ENCODE measurements at regions of chr3 and their contacts with region 1.

Region 1: GRCh38 chr3:128426128-128426921 is 40.4 kb downstream of the DNAJB8 start:
- DNase-seq: peak; percentile 55
- ATAC-seq: peak; percentile 99
- H3K4me3 Mint-ChIP-seq: no peak overlapping the region
- H3K27ac Mint-ChIP-seq: no peak overlapping the region
- H3K4me1 Mint-ChIP-seq: no peaks in the 10 kb centered on the region
- H3K27me3 Mint-ChIP-seq: peaks cover 16% of the 10 kb centered on the region
- CTCF ChIP-seq: peak; percentile 98

Region 2: DNA sequence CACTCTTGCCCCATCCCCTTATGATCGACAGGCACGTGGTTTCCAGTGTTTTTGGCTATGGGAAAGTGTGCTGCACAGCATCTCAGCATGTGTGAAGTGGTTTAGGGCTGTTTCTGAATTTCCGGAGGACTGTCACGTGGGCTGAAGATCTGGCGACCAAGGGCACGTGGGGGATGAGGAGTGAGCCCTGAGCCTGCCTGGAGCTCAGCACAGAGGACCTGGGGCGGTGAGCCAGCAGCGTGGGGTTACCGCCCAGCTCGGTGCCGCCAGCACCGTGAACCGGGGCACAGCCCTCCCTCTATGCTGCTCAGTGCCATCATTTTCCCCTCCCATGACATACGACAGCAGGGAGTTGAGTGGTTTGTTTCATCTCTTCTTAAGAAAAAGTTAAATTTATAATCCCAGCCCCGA is 109.8 kb before region 1 on chr3:
- CTCF ChIA-PET with region 1: no interaction called
- POLR2A ChIA-PET with region 1: no interaction called
- intact Hi-C with region 1: no loop called
- DNase-seq: peak; percentile 64
- ATAC-seq: peak; percentile 84
- H3K4me3 Mint-ChIP-seq: no peak overlapping the region
- H3K27ac Mint-ChIP-seq: peak overlapping the region; percentile 73
- H3K4me1 Mint-ChIP-seq: peaks cover 55% of the 10 kb centered on the region
- H3K27me3 Mint-ChIP-seq: no peaks in the 10 kb centered on the region
- CTCF ChIP-seq: no peak

Region 3: DNA sequence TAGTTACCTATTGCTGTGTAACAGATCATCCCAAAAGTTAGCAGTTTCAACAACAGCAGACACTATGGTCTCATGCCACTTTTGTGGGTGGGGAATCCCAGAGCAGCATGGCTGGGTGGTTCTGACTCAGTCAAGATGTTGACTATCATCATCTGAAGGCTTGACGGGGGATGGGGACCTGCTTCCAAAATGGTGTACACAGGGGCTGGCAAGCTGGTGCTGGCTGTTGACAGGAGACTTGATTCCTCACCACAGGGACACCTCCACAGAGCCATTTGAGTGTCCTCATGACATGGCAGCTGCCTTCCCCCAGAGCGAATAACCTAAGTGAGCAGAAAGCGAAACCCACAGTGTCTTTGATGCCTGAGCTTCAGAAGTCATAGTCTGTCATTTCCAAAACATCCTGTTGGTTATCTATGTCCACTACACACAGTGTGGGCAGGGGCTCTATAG is 21.3 kb after region 1 on chr3:
- CTCF ChIA-PET with region 1: interaction called, 21 read pairs
- POLR2A ChIA-PET with region 1: no interaction called
- intact Hi-C with region 1: no loop called
- DNase-seq: peak; percentile 90
- ATAC-seq: peak; percentile 80
- H3K4me3 Mint-ChIP-seq: no peak overlapping the region
- H3K27ac Mint-ChIP-seq: peak overlapping the region; percentile 82
- H3K4me1 Mint-ChIP-seq: peaks cover 21% of the 10 kb centered on the region
- H3K27me3 Mint-ChIP-seq: peaks cover 5% of the 10 kb centered on the region
- CTCF ChIP-seq: no peak

Region 4: GRCh38 chr3:128497387-128498126 is 71.2 kb after region 1 on chr3:
- CTCF ChIA-PET with region 1: interaction called, 46 read pairs
- POLR2A ChIA-PET with region 1: no interaction called
- intact Hi-C with region 1: loop called (anchors 2 kb)
- DNase-seq: peak; percentile 81
- ATAC-seq: peak; percentile 70
- H3K4me3 Mint-ChIP-seq: peak overlapping the region; percentile 66
- H3K27ac Mint-ChIP-seq: no peak overlapping the region
- H3K4me1 Mint-ChIP-seq: no peaks in the 10 kb centered on the region
- H3K27me3 Mint-ChIP-seq: peaks cover 45% of the 10 kb centered on the region
- CTCF ChIP-seq: peak; percentile 98

Region 5: DNA sequence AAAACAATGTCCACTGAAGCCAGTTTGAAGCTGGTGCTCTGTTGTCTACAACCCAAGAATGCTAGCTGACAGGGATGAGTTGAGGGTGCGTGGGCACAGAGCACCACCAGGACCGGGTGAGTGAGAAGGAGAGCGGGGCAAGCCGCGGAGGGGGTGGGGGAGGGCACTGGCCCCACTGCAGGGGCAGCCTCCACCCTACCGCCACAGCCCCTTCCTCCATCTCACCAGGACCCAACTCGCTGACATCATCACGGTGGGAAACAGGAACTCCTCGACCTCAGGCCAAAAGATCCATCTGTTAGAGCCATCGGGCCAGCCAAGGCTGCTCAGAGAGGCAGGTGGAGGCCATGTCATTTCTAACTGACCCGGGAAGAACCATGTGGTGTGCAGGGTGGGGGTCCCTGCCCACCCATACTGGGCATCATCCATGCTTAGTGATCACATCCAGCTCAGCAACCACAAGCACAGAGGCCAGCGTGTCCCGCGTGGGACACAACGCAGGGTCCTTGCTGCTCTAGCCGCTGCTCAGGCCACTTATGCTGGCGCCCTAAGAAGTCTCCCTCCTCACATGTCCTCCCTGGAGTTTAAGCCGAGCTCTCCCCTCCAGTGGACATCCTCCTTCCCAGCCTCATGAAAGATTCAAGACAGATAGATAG is 124.3 kb after region 1 on chr3:
- CTCF ChIA-PET with region 1: no interaction called
- POLR2A ChIA-PET with region 1: no interaction called
- intact Hi-C with region 1: no loop called
- DNase-seq: no peak
- ATAC-seq: no peak
- H3K4me3 Mint-ChIP-seq: no peak overlapping the region
- H3K27ac Mint-ChIP-seq: no peak overlapping the region
- H3K4me1 Mint-ChIP-seq: no peaks in the 10 kb centered on the region
- H3K27me3 Mint-ChIP-seq: peaks cover 27% of the 10 kb centered on the region
- CTCF ChIP-seq: no peak

Region 6: DNA sequence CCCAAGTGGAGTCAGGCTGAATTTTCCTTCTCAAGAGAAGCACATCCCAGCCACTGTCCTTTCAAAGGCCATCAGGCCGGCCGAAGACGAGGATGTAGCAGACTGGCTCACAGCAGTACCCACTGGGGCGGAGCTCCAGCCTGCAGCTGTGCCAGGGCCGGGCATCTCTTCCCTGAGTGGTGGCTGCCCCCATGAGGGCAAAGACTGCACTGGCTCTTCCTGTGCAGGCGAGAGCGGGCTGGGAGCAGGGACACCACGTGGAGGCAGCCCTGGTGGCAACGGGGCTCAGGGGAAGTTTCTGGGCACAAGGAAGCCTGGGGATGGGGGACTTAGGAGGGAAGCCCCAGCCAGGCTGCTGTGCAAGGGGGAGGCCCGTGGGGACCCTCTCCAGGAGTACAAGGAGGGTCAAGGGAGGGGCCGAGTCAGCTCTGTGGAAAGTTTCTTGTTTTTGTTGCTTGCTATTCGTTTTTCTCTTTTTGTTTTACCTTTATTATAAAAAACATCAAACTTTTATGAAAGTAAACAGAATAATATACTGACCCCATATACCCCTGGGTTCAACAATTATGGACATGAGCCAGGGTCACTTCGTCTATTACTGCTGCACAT is 158.2 kb after region 1 on chr3:
- CTCF ChIA-PET with region 1: interaction called, 12 read pairs
- POLR2A ChIA-PET with region 1: no interaction called
- intact Hi-C with region 1: no loop called
- DNase-seq: peak; percentile 72
- ATAC-seq: peak; percentile 99
- H3K4me3 Mint-ChIP-seq: no peak overlapping the region
- H3K27ac Mint-ChIP-seq: no peak overlapping the region
- H3K4me1 Mint-ChIP-seq: no peaks in the 10 kb centered on the region
- H3K27me3 Mint-ChIP-seq: peaks cover 13% of the 10 kb centered on the region
- CTCF ChIP-seq: peak; percentile 73